Activated CD4-positive, alpha-beta memory T cell treated with anti-CD3 and anti-CD28 coated beads for 36 hours (primary cell): ENCODE measurements at regions of chr12 and their contacts with region 1.

Region 1: DNA sequence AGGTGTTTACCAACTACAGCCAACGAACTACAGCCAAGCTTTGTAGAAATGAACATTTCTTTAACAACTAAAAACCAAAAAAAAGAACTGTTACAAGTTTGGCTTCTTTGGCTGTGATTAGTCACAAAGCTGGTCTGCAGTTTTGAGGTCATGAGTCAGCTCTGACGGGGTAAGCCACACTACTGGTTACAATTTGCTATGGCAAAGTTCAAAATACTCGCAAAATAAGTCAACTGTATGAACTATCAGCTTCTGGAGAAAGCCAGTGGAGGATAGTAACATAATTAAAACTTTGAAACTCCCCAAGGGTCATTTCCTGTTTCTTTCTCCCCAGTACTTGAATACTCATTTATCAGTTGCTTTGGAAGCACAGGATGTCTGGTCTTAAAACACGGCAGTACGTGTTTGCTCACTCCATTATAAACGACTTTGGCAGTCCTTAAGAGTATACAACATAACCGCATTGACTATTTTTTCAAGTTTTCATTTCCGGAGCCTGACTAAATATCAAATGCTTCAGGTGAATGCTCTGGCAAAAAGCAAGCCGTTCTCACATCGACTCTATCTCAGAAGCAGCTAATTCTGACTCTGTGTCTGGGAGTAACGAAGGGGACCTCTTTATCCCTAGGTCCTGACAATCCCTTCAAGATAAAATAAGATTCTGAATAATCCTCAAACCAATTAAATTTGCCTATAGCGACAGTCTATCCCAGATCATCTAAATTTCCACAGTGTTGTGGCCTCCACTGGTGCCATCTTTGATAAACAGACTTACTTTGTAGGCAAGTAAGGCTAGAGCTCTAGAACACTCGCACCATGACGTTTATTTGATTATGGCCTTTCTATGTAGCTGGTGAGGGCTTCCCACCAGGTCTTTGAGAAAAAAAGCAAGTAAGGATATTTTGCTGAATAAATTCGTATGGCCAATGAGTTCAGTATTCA is 10.6 kb downstream of the PHLDA1 start:
- DNase-seq: peak; percentile 90
- H3K4me3 Mint-ChIP-seq: peak overlapping the region; percentile 68
- H3K27ac Mint-ChIP-seq: peak overlapping the region; percentile 99
- H3K4me1 Mint-ChIP-seq: peaks cover 60% of the 10 kb centered on the region
- H3K27me3 Mint-ChIP-seq: no peaks in the 10 kb centered on the region

Region 2: DNA sequence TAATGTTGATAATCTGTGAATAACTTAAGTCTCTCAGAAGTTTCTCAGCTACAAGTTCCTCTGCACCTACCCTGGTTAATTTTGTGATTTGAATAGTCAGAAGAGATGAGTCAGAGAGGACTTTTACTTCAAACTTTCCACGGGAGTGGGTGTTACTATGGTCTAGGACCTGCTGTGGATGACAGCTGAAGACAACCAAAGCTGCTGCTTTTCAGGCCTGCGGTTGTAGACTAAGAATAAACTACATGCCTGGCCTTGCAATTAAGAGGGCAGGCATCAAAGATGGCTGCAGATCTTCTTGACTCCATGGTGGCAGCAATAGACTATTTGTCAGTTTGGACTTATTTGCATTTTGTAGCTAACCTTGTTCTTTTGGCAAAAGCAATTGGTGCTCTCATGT is 282.5 kb before region 1 on chr12:
- CTCF ChIA-PET with region 1: no interaction called
- POLR2A ChIA-PET with region 1: interaction called, 4 read pairs
- intact Hi-C with region 1: loop called (anchors 1 kb)
- DNase-seq: peak; percentile 51
- H3K4me3 Mint-ChIP-seq: no peak overlapping the region
- H3K27ac Mint-ChIP-seq: no peak overlapping the region
- H3K4me1 Mint-ChIP-seq: peaks cover 18% of the 10 kb centered on the region
- H3K27me3 Mint-ChIP-seq: peaks cover 2% of the 10 kb centered on the region

Region 3: GRCh38 chr12:75913502-75914351 is 107.3 kb before region 1 on chr12:
- CTCF ChIA-PET with region 1: interaction called, 3 read pairs
- POLR2A ChIA-PET with region 1: interaction called, 9 read pairs
- intact Hi-C with region 1: loop called (anchors 1 kb)
- DNase-seq: peak; percentile 73
- H3K4me3 Mint-ChIP-seq: no peak overlapping the region
- H3K27ac Mint-ChIP-seq: peak overlapping the region; percentile 9
- H3K4me1 Mint-ChIP-seq: peaks cover 28% of the 10 kb centered on the region
- H3K27me3 Mint-ChIP-seq: no peaks in the 10 kb centered on the region

Region 4: GRCh38 chr12:75944097-75944904 is 76.7 kb before region 1 on chr12:
- CTCF ChIA-PET with region 1: no interaction called
- POLR2A ChIA-PET with region 1: interaction called, 21 read pairs
- intact Hi-C with region 1: loop called (anchors 1 kb)
- DNase-seq: peak; percentile 42
- H3K4me3 Mint-ChIP-seq: peak overlapping the region; percentile 34
- H3K27ac Mint-ChIP-seq: peak overlapping the region; percentile 95
- H3K4me1 Mint-ChIP-seq: peaks cover 29% of the 10 kb centered on the region
- H3K27me3 Mint-ChIP-seq: no peaks in the 10 kb centered on the region

Region 5: GRCh38 chr12:75994186-75994731 is 26.7 kb before region 1 on chr12:
- CTCF ChIA-PET with region 1: interaction called, 3 read pairs
- POLR2A ChIA-PET with region 1: interaction called, 7 read pairs
- intact Hi-C with region 1: loop called (anchors 1 kb)
- DNase-seq: peak; percentile 45
- H3K4me3 Mint-ChIP-seq: no peak overlapping the region
- H3K27ac Mint-ChIP-seq: peak overlapping the region; percentile 70
- H3K4me1 Mint-ChIP-seq: peaks cover 29% of the 10 kb centered on the region
- H3K27me3 Mint-ChIP-seq: no peaks in the 10 kb centered on the region

Region 6: DNA sequence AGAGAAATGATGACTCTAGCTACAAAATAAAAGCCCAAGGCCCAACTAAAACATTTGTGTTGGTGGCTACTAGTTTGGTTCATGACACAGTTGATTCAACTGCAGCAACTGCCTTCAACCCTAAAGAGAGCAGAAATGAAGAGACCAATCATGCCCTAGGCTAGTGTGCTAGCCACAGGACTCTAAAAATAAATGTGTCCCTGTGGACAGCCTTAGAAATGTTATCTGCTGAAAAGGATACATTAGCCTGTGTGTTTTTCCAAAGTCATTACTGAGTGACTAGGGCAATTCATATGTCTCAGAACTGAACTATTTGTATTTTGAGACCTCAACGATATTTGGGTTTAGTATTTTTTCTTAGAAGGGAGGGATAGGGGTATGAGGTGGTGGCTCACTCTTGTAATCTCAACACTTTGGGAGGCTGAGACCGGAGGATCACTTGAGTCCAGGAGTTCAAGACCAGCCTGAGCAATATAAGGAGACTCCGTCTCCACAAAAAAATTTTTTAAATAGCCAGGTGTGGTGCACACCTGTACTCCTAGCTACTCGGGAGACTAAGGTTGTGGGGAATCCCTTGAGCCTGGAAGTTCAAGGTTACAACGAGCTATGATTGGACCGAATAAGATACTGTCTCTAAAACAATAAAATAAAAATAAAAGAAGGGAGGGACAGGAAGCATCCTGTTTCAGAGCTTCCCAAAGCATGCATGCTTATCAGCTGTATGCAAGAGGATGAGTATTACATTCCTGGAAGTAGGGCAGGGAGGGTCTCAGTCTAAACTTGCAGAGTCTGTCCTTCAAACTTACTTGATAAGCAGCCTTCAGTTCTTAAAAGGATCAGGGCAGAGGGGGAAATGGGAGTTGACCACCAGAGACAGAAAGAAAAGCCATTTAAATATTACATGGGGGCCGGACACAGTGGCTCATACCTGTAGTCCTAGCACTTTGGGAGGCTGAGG is 93.1 kb after region 1 on chr12:
- CTCF ChIA-PET with region 1: no interaction called
- POLR2A ChIA-PET with region 1: no interaction called
- intact Hi-C with region 1: no loop called
- DNase-seq: no peak
- H3K4me3 Mint-ChIP-seq: no peak overlapping the region
- H3K27ac Mint-ChIP-seq: no peak overlapping the region
- H3K4me1 Mint-ChIP-seq: no peaks in the 10 kb centered on the region
- H3K27me3 Mint-ChIP-seq: no peaks in the 10 kb centered on the region